PC-9 (cell line): ENCODE measurements at regions of chr4 and their contacts with region 1.

Region 1: DNA sequence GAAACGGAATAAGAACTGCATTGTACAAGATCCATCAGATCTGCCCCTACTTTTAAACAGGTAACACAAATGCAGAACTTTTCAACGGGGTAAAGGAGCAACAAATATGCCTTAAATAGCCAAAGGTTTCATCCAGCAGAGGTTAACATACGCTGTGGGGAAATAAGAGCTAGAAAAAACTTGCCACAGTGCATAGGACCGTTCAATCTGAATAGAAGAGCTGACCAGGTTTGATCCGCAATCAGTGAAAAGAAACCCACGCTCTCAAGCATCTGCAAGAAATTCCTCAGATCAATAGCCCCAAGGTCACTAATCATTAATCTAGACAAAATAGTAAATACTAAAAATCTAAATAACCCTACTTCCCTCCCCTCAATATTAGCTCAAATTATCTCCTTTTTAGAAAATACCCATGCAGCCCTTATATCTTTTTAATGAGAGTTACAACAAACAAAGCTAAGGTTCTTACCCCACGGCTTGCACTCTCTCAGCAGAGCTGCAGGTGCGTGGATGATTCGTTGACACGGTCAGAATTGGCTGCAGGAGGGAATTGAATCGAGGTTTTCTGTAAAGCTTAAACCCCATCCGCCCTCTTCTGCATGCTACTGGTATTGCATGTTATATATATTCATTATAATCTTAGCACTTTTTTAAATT is at the start of gene TLR10:
- DNase-seq: peak in 1 of 2 experiments; percentile 9
- H3K4me3 ChIP-seq: no peak within 1 kb of the TSS
- H3K27ac ChIP-seq: no peak within 1 kb of the TSS
- H3K4me1 ChIP-seq: no peaks in the 10 kb centered on the region
- H3K27me3 ChIP-seq: no peaks in the 10 kb centered on the region
- CTCF ChIP-seq: peak; percentile 75
- total RNA-seq, gene TLR10: not detected in 2 replicates

Region 2: DNA sequence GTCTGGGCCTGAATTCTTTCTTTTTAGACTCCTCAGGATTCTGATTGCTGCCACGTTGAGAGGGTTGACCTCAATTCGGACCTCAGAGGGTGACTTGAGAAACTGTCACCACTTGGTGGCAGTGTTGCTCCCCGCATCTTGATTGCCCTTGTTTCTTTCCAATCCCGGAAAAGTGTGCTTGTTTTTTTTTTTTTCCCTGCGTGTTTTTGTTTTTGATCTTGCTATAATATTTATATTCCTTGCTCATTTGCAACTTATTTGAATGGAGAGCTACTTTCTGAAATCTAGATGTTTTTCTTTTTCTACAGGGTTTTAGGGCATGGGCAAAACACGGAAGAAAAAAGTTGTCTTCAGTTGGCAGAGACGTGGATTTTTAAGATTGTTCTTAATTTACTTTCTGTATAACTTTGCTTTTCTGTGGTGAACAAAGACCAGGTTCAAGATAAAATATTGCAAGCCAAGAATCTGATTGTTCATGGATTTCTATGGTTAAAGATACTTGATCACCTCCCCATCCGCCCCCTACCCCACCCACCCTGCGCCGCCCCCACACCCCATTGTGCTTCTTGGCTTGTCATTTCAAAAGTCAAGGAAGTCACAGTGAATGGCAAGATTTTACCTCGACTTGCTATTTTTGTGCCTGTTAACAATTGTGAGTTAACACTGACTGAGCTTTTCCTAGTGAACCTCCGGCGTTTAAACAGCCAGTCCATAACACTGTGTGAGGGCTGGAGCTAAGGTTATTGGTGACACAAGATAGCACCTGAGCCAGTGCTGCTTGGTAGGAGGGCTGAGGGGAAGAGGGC is 720.3 kb before region 1 on chr4:
- CTCF ChIA-PET with region 1: no interaction called
- POLR2A ChIA-PET with region 1: no interaction called
- intact Hi-C with region 1: loop called (anchors 2 kb)
- DNase-seq: peak; percentile 58 to 70
- H3K4me3 ChIP-seq: no peak overlapping the region
- H3K27ac ChIP-seq: no peak overlapping the region
- H3K4me1 ChIP-seq: peaks cover 19% of the 10 kb centered on the region
- H3K27me3 ChIP-seq: no peaks in the 10 kb centered on the region
- CTCF ChIP-seq: peak; percentile 90

Region 3: DNA sequence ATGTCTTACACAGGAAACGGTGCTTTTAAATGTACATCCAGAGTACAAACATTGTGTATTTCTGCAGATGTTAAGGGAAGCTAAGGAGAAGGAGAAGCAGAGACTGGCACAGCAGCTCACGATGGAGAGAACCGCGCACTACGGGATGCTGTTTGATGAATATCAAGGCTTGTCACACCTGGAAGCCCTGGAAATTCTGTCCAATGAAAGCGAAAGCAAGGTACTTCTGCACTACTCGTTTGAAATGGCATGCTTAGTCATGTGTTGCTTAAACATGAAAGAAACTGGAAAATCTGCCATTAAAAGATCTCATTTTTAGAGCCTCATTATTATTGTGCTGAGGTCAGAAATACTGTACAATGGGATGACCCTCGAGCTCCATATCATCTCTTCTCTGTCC is 132.3 kb after region 1 on chr4:
- CTCF ChIA-PET with region 1: no interaction called
- POLR2A ChIA-PET with region 1: no interaction called
- intact Hi-C with region 1: no loop called
- DNase-seq: no peak
- H3K4me3 ChIP-seq: no peak overlapping the region
- H3K27ac ChIP-seq: no peak overlapping the region
- H3K4me1 ChIP-seq: no peaks in the 10 kb centered on the region
- H3K27me3 ChIP-seq: no peaks in the 10 kb centered on the region
- CTCF ChIP-seq: no peak